Ascending aorta (tissue), 2 donors: ENCODE measurements at regions of chr7 and their contacts with region 1.

Region 1: GRCh38 chr7:107661081-107661864 is 645 bp downstream of the SLC26A4 start:
- DNase-seq: peak in 1 of 2 donors; percentile 73
- H3K4me3 ChIP-seq: peak overlapping the region; percentile 52 to 75
- H3K27ac ChIP-seq: no peak overlapping the region
- H3K4me1 ChIP-seq: peaks cover 9 to 10% of the 10 kb centered on the region in 2 donors
- H3K27me3 ChIP-seq: no peaks in the 10 kb centered on the region
- CTCF ChIP-seq: peak in 1 of 3 experiments; percentile 45

Region 2: DNA sequence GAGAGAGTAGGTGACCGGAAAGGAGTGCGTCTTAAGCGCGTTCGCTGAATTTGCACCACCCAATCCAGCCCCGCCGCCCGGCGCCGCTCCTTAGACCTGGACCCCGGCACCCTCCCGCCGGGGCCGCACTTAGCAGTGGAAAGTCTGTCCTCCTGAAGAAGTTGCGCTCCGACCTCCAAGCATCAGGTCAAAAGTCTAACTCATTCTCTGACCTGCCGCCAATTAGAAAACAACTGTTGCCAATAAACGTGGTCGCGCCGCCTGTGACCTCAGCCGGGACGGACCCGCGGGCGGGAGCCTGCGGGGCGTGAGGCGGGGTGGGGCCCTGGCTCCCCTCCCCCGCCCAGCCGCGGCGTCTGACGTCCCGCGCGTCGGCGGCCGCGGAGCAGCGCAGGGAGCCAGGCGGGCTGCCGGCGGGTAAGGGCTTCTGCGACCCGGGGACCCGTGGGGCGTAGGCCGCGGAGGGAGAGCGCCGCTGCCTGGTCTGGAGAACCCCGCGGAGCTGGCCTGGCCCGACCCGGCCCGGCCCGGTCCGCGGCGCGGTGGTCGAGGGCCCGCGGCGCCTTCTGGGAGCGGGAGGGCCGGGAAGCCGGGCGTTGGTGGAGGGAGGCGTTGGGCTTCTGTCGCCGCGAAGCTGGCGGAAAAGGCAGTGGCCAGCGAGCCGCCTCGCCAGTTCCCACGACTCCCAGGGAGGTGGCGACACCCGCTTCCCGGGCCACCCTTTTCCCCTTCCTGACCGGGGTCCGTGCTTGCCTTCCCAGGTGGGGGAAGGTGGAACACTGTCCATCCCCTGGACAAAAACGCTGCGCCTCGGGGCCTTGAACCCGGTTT is 81.2 kb before region 1 on chr7 and contains the start of gene BCAP29:
- intact Hi-C with region 1: loop called (anchors 5 kb)
- DNase-seq: peak; percentile 19 to 89
- H3K4me3 ChIP-seq: peak within 1 kb of the TSS; percentile 84 to 91
- H3K27ac ChIP-seq: peak within 1 kb of the TSS; percentile 93 to 97
- H3K4me1 ChIP-seq: peaks cover 0 to 11% of the 10 kb centered on the region in 2 donors
- H3K27me3 ChIP-seq: no peaks in the 10 kb centered on the region
- CTCF ChIP-seq: peak; percentile 22 to 50 (median 29)
- total RNA-seq, gene BCAP29: 73.2 TPM